ENCODE measurements at regions of chr1 and their contacts with region 1.

Region 1: DNA sequence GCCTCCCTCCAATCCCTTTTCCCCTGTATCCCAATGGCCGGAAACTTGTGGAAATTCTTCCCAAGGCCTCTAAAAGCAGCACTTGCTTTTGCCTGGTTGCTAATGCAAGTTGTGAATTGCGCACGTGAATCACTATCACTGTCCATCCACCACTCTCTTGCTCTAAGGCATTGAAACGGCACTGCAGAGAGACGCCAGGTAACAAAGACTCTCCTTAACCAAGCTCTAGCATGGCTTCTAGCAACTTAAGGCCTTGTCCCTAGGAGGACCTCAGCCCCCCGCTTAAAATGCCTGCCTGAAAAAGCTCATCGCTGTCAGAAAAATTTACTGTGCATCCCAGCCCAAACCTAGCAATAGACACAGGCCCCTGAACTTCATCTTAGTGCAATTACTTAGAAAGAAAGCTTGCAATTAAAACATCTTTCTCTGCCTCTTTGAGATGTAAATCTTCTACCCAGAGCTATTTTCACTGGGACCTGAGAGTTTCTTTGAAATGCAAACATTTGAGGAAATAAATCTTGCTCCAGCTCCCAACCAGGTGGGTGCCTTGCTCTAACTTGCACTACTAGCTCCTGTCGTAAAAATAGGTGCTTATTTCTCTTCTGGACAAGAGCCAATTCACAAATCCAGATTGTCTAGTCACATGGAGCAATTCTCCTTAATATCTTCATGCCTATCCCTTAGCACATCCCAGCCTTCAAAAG is 32.9 kb upstream of the ITLN2 start:
- DNase-seq: no peak
- H3K4me3 ChIP-seq: peak overlapping the region in 1 of 4 experiments; percentile 34; a peak in 4 of 8 replicates
- H3K27ac ChIP-seq: peak overlapping the region; percentile 55
- H3K4me1 ChIP-seq: peaks cover 5 to 16% (median 9%) of the 10 kb centered on the region in 4 experiments; a peak in 6 of 7 replicates
- H3K27me3 ChIP-seq: no peaks in the 10 kb centered on the region
- CTCF ChIP-seq: no peak
- EP300 ChIP-seq: no peak
- POLR2A ChIP-seq: no peak
- RAD21 ChIP-seq: no peak

Region 2: DNA sequence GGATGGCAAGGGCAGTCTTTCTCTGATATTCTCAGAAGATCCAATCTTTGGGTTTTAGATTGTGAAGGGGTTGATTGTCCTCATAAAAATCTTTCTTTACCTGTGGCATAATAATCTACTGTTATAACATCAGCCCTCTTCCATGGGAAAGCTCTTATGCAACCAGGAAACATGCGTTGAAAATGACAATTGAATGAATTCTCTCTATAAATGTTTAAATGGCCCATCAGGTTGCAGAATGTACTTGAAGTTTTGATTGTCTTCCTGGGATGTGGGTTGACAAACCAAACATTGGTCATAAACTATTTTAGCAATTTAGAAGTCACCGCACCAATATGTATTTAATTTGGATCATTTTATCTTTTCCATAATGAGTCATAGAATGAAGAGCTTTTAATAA is 70.8 kb before region 1 on chr1:
- CTCF ChIA-PET with region 1: no interaction called
- POLR2A ChIA-PET with region 1: no interaction called
- DNase-seq: no peak
- H3K4me3 ChIP-seq: no peak overlapping the region
- H3K27ac ChIP-seq: no peak overlapping the region
- H3K4me1 ChIP-seq: peaks cover 0 to 4% (median 0%) of the 10 kb centered on the region in 4 experiments; a peak in 1 of 7 replicates
- H3K27me3 ChIP-seq: no peaks in the 10 kb centered on the region
- CTCF ChIP-seq: no peak
- EP300 ChIP-seq: no peak
- POLR2A ChIP-seq: no peak
- RAD21 ChIP-seq: no peak

Region 3: DNA sequence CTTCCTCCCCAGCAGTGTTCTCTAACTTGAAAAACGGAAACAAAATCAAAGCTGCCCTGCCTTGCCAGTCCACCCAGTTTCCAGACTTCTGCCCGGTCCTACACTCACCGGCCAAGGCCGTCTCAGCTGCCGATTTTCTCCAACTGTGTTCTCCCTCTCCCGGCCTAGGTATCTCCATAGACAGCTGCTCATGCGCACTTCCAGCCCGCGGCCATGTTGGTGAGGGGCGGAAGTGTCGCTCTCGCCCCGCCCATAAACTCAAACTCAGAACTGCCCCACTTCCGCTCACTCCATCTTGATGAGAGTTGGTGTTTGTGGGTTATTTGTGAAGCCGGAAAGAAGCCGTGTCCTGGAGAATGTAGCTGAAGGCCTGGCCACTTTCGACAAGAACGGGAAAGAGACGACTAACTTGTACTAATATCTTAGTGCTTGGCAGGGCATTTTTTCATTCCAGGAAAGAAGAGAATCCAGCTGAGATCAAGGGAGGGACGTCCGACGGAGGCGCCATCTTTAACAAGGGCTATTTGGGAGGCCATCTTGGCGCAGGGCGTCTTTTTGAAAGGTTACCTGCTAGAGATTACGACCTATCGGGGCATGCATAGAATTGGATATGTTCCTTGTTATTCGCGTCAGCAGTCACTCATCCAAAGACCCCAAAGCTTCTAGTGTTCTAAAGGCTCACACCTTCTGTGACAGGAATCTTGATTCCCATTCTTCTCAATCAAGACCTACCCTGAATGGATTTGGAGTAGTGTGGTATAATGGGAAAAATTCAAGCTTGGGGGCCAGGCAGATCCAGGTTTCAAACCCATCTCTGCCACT is 58.5 kb after region 1 on chr1 and contains the start of gene USF1:
- CTCF ChIA-PET with region 1: interaction called, 5 read pairs
- POLR2A ChIA-PET with region 1: interaction called, 16 read pairs
- DNase-seq: peak; percentile 86 to 93
- H3K4me3 ChIP-seq: peak within 1 kb of the TSS; percentile 75 to 98 (median 87)
- H3K27ac ChIP-seq: peak within 1 kb of the TSS; percentile 97
- H3K4me1 ChIP-seq: peaks cover 0 to 4% (median 1%) of the 10 kb centered on the region in 4 experiments; a peak in 2 of 7 replicates
- H3K27me3 ChIP-seq: peaks cover 0 to 17% (median 8%) of the 10 kb centered on the region in 4 experiments; a peak in 6 of 7 replicates
- CTCF ChIP-seq: no peak
- EP300 ChIP-seq: no peak
- POLR2A ChIP-seq: peak; percentile 78 to 96
- RAD21 ChIP-seq: no peak
- total RNA-seq, gene USF1: 68.9 and 74.6 TPM in 2 replicates

Measured in H1 (cell line).